Activated T-helper 1 cell treated with anti-CD3 and anti-CD28 coated beads, Interleukin-12 subunit alpha, Interleukin-12 subunit beta, Interleukin-2, Interleukin-4 antibody, amounts not matched to agents 30 ng/mL and 10 ng/mL and 1 ng/mL, durations not matched to agents 14 hours and 24 hours and 36 hours (primary cell): ENCODE measurements at regions of chr15 and their contacts with region 1.

Region 1: DNA sequence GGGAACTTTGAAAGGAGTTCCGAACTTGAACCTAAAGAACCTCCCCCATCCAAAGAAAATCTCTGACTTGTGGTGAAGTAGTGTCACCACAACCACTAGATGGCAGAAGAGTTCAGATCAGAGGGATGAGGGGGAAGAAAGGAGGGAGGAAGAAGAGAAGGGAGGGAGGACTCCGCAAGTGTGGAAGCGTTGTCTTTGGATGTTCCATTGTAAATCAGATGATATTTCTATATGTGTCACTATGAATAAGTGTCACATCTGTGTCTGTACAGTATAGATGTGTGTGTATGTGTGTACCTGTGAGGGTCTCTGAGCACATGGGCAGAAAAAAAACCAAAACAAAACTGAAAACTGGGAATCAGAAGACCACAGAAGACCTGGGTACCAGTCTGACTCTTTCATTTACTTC is 16.9 kb downstream of the SLC24A1 start:
- DNase-seq: peak; percentile 48
- H3K4me3 Mint-ChIP-seq: peak overlapping the region; percentile 0
- H3K27ac Mint-ChIP-seq: no peak overlapping the region
- H3K4me1 Mint-ChIP-seq: peaks cover 10% of the 10 kb centered on the region
- H3K27me3 Mint-ChIP-seq: no peaks in the 10 kb centered on the region

Region 2: GRCh38 chr15:65832549-65833364 is 194.1 kb after region 1 on chr15:
- intact Hi-C with region 1: loop called (anchors 5 kb)
- DNase-seq: peak; percentile 50
- H3K4me3 Mint-ChIP-seq: peak overlapping the region; percentile 77
- H3K27ac Mint-ChIP-seq: peak overlapping the region; percentile 96
- H3K4me1 Mint-ChIP-seq: peaks cover 54% of the 10 kb centered on the region
- H3K27me3 Mint-ChIP-seq: no peaks in the 10 kb centered on the region

Region 3: GRCh38 chr15:65856821-65857455 is 218.3 kb after region 1 on chr15:
- intact Hi-C with region 1: loop called (anchors 1 kb)
- DNase-seq: peak; percentile 70
- H3K4me3 Mint-ChIP-seq: no peak overlapping the region
- H3K27ac Mint-ChIP-seq: no peak overlapping the region
- H3K4me1 Mint-ChIP-seq: no peaks in the 10 kb centered on the region
- H3K27me3 Mint-ChIP-seq: peaks cover 6% of the 10 kb centered on the region

Region 4: GRCh38 chr15:66193066-66193465 is 554.4 kb after region 1 on chr15:
- intact Hi-C with region 1: loop called (anchors 5 kb)
- DNase-seq: no peak
- H3K4me3 Mint-ChIP-seq: no peak overlapping the region
- H3K27ac Mint-ChIP-seq: no peak overlapping the region
- H3K4me1 Mint-ChIP-seq: no peaks in the 10 kb centered on the region
- H3K27me3 Mint-ChIP-seq: peaks cover 11% of the 10 kb centered on the region

Region 5: GRCh38 chr15:66545249-66545648 is 906.6 kb after region 1 on chr15:
- intact Hi-C with region 1: no loop called
- DNase-seq: no peak
- H3K4me3 Mint-ChIP-seq: no peak overlapping the region
- H3K27ac Mint-ChIP-seq: no peak overlapping the region
- H3K4me1 Mint-ChIP-seq: peaks cover 5% of the 10 kb centered on the region
- H3K27me3 Mint-ChIP-seq: no peaks in the 10 kb centered on the region